ENCODE measurements at regions of chr6 and their contacts with region 1.

Region 1: DNA sequence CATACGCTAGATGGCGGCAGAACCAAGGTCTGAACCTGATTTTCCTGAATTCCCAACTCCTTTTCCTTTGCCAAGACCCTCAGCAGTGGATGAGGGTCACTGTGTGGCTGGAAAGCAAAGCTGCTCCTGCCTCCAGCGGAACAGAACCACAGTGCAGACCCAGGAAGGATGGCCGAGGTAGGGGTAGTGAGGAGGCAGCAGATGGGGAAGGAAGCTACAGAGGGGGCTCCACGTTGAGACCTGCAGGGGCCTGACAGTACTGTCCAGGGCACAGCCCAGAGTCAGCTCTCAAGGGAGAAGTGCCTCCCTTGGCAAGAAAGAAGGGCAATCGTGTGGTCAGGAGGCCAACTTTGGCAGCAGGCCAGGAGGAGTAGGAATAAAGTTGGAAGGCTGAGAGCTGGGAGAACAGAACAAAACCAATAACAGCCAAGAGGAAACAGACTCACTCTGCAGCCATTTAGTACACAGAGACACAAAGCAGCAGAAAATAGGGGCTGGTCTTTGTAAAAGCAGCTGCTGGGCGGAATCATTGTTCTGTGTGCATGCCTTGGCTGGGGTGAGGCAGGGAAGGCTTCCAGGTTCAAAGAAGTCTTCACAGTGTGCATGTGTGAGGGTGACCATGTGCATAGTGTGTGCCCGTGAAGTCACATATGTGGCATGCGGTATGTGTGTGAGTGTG is 3.1 kb downstream of the GABRR2 start:
- DNase-seq: peak; percentile 38 to 80
- H3K4me3 ChIP-seq: no peak overlapping the region
- H3K27ac ChIP-seq: no peak overlapping the region
- H3K4me1 ChIP-seq: peaks cover 0 to 3% (median 1%) of the 10 kb centered on the region in 4 experiments; a peak in 3 of 7 replicates
- H3K27me3 ChIP-seq: no peaks in the 10 kb centered on the region
- CTCF ChIP-seq: peak; percentile 40 to 98 (median 97)
- EP300 ChIP-seq: no peak
- POLR2A ChIP-seq: no peak
- RAD21 ChIP-seq: peak; percentile 92 to 94

Region 2: GRCh38 chr6:89290401-89291155 is 21.4 kb before region 1 on chr6:
- CTCF ChIA-PET with region 1: interaction called, 26 read pairs
- POLR2A ChIA-PET with region 1: no interaction called
- DNase-seq: no peak
- H3K4me3 ChIP-seq: no peak overlapping the region
- H3K27ac ChIP-seq: no peak overlapping the region
- H3K4me1 ChIP-seq: peaks cover 0 to 5% (median under 1%) of the 10 kb centered on the region in 4 experiments; a peak in 4 of 7 replicates
- H3K27me3 ChIP-seq: no peaks in the 10 kb centered on the region
- CTCF ChIP-seq: no peak
- EP300 ChIP-seq: no peak
- POLR2A ChIP-seq: no peak
- RAD21 ChIP-seq: no peak

Region 3: DNA sequence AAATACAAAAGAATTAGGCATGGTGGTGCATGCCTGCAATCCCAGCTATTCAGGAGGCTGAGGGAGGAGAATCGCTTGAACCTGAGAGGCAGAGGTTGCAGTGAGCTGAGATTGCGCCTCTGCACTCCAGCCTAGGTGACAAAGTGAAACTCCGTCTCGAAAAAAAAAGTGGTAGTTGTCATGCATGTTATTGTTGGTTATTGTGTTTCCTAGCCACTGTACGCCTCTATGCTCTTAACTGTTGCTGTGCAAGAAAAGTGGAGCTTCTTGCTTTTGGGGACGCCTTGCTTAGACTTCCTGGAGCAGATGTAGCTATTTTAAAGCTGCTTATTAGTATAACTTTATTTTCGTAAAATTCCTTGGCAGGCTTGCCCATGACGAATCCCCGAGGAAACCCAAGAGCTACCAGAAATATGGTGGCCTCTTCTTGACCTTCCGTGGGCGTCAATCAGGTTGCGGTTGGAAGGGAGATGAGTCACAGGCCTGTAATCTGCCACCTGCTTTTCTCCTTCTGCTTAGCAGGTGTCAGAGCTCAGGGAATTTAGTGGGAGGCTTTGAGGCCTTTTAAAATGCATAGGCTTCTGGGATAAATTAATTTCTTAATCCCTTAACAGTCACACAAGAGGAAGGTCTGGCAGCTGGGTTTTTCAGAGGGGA is 14.2 kb before region 1 on chr6:
- CTCF ChIA-PET with region 1: interaction called, 65 read pairs
- POLR2A ChIA-PET with region 1: no interaction called
- DNase-seq: no peak
- H3K4me3 ChIP-seq: no peak overlapping the region
- H3K27ac ChIP-seq: no peak overlapping the region
- H3K4me1 ChIP-seq: peaks cover 0 to 6% (median 0%) of the 10 kb centered on the region in 4 experiments; a peak in 3 of 7 replicates
- H3K27me3 ChIP-seq: 0 out of 7 replicates have a peak, but pooled peaks cover 0 to 2% (median 0%) of the 10 kb centered on the region in 4 experiments
- CTCF ChIP-seq: no peak
- EP300 ChIP-seq: no peak
- POLR2A ChIP-seq: no peak
- RAD21 ChIP-seq: no peak

Region 4: GRCh38 chr6:89323511-89323971 is 11.5 kb after region 1 on chr6:
- CTCF ChIA-PET with region 1: interaction called, 12 read pairs
- POLR2A ChIA-PET with region 1: no interaction called
- DNase-seq: no peak
- H3K4me3 ChIP-seq: no peak overlapping the region
- H3K27ac ChIP-seq: no peak overlapping the region
- H3K4me1 ChIP-seq: no peaks in the 10 kb centered on the region
- H3K27me3 ChIP-seq: no peaks in the 10 kb centered on the region
- CTCF ChIP-seq: no peak
- EP300 ChIP-seq: no peak
- POLR2A ChIP-seq: no peak
- RAD21 ChIP-seq: no peak

Region 5: DNA sequence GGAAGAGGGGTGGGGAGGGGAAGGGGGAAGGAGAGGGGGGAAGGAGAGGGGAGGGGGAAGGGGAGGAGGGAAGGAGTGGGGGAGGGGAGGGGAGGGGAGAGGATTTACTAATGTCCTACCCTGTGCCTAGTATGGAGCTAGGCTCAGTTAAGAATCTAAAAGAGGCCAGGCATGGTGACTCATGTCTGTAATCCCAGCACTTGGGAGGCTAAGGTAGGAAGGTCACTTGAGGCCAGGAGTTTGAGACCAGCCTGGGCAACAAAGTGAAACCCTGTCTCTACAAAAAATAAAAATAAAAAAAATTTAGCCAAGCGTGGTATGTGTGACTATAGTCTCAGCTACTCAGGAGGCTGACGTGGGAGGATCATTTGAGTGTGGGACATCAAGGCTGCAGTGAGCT is 27.6 kb after region 1 on chr6:
- CTCF ChIA-PET with region 1: interaction called, 15 read pairs
- POLR2A ChIA-PET with region 1: no interaction called
- DNase-seq: no peak
- H3K4me3 ChIP-seq: no peak overlapping the region
- H3K27ac ChIP-seq: no peak overlapping the region
- H3K4me1 ChIP-seq: no peaks in the 10 kb centered on the region
- H3K27me3 ChIP-seq: no peaks in the 10 kb centered on the region
- CTCF ChIP-seq: no peak
- EP300 ChIP-seq: no peak
- POLR2A ChIP-seq: no peak
- RAD21 ChIP-seq: no peak

Region 6: DNA sequence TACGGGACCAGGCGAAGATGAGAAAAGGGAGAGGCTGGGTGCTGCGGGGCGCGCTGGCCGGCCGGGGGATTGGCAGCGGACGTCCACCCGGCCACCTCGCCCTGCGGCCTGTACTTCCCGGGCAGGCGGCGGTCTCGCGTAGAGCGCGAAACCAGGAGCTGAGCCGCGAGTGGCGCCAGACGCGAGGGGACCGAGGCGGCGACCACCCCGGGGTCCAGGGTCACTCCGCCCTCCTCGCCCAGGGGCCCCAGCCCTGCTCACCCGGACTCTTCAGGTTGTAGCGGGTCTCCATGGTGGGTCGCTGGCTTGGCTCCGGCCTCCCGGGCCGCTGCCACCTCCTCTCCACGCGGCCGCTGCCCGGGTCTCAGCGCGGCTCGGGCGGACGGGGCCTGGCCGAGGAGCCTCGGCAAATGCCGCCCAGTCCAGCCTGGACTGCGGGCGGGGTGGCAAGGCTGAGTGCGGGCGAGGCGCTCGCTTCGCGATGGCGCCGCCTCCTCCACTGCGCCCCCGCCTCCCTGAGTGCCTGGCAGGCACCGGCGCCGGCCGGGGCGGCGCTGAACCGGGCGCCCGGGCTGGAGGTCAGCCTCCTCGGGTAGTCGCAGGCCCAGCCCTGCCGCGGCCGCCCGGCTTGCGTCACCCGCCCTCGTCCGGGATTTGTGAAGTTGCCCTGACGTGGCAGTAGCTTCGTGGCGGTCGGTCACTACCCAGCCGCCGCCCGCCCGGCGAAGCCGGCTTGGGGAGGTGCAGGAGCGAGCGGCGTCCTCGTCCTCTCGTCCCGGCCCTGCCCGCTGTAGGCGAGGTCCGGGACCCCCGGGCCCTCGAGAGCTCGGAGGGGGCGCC is 40.5 kb after region 1 on chr6 and contains the start of gene UBE2J1:
- CTCF ChIA-PET with region 1: interaction called, 21 read pairs
- POLR2A ChIA-PET with region 1: interaction called, 6 read pairs
- DNase-seq: peak in 1 of 2 experiments; percentile 90
- H3K4me3 ChIP-seq: peak within 1 kb of the TSS; percentile 63 to 70 (median 67)
- H3K27ac ChIP-seq: peak within 1 kb of the TSS; percentile 19; the same call in 1 of the 2 replicates
- H3K4me1 ChIP-seq: peaks cover 0 to 4% (median 0%) of the 10 kb centered on the region in 4 experiments; a peak in 1 of 7 replicates
- H3K27me3 ChIP-seq: no peaks in the 10 kb centered on the region; a peak in 2 of 7 replicates
- CTCF ChIP-seq: no peak
- EP300 ChIP-seq: 0 out of 3 replicates have a peak, but pooled peaks of 1 of the 2 experiments have one; percentile 24
- POLR2A ChIP-seq: peak; percentile 68 to 90
- RAD21 ChIP-seq: no peak
- total RNA-seq, gene UBE2J1: 13.4 and 15.2 TPM in 2 replicates

Region 7: GRCh38 chr6:89610149-89610642 is 298.2 kb after region 1 on chr6:
- CTCF ChIA-PET with region 1: interaction called, 12 read pairs
- POLR2A ChIA-PET with region 1: no interaction called
- DNase-seq: peak in 1 of 2 experiments; percentile 90
- H3K4me3 ChIP-seq: no peak overlapping the region
- H3K27ac ChIP-seq: no peak overlapping the region
- H3K4me1 ChIP-seq: no peaks in the 10 kb centered on the region
- H3K27me3 ChIP-seq: no peaks in the 10 kb centered on the region
- CTCF ChIP-seq: peak; percentile 80 to 89 (median 82)
- EP300 ChIP-seq: no peak
- POLR2A ChIP-seq: no peak
- RAD21 ChIP-seq: peak; percentile 75 to 77

Measured in H1 (cell line).